Colonic mucosa (tissue), 4 donors: ENCODE measurements at regions of chr1 and their contacts with region 1.

Region 1: GRCh38 chr1:10867138-10867721 is 70.8 kb upstream of the CASZ1 start:
- DNase-seq: peak; percentile 64
- H3K4me3 ChIP-seq: peak overlapping the region; percentile 32
- H3K27ac ChIP-seq: no peak overlapping the region
- H3K4me1 ChIP-seq: no peaks in the 10 kb centered on the region
- H3K27me3 ChIP-seq: peaks cover 6% of the 10 kb centered on the region
- CTCF ChIP-seq: peak; percentile 52

Region 2: GRCh38 chr1:10507111-10507879 is 359.9 kb before region 1 on chr1:
- intact Hi-C with region 1: loop called (anchors 5 kb)
- DNase-seq: peak; percentile 57
- H3K4me3 ChIP-seq: no peak overlapping the region
- H3K27ac ChIP-seq: no peak overlapping the region
- H3K4me1 ChIP-seq: peaks cover 13% of the 10 kb centered on the region
- H3K27me3 ChIP-seq: no peaks in the 10 kb centered on the region
- CTCF ChIP-seq: peak; percentile 88

Region 3: DNA sequence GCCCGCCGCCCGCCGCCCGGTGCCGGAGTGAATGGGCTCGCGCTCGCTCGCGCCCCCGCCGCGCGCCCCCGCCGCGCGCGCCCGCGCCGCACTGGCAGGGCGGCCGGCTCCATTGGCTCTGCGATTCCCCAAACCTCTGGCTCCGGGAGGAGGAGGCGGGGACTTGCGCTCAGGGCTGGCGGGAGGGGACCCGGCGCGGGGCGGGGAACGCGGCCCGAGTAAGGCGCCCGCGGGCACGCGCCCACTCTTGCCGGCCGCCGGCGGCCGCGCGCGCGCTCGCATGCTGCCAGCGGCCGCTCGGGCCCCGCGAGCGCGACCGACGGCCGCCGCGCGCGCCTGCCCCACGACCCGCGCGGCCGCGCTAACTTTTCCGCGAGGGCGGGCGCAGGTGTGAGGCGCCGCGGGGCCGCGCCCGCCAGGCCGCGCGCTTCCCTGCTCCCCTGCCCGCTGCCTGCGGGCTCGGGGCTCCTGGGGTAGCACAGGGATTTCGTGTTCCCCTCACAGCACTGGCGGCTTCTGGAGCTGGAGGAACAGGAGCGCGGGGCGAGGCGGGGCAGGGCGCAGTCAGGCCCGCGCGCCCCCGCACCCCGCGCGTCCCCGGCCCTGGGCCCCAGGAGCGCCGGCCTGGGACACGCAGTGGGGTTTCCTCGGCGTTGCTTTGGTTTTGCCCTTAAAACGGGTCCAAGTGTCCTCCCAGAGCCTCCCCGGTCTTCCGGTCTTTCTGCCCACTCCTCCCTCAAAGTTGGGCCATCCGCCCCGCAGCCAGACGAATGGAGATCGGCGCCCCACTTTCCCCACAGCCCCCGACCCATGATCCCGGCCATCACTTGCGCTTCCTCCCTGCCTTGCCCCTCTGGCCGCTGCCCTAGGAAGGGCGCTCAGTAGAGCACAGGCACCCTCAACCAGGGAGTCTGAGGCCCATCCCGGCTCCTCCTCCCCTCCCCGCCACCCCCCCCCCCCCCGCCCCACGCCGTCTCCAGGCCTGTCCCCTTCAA is 172.3 kb before region 1 on chr1:
- intact Hi-C with region 1: loop called (anchors 5 kb)
- DNase-seq: peak; percentile 87
- H3K4me3 ChIP-seq: peak overlapping the region; percentile 44
- H3K27ac ChIP-seq: peak overlapping the region; percentile 71
- H3K4me1 ChIP-seq: peaks cover 15% of the 10 kb centered on the region
- H3K27me3 ChIP-seq: no peaks in the 10 kb centered on the region
- CTCF ChIP-seq: no peak

Region 4: GRCh38 chr1:10745886-10746455 is 121.3 kb before region 1 on chr1:
- intact Hi-C with region 1: loop called (anchors 10 kb)
- DNase-seq: no peak
- H3K4me3 ChIP-seq: no peak overlapping the region
- H3K27ac ChIP-seq: no peak overlapping the region
- H3K4me1 ChIP-seq: no peaks in the 10 kb centered on the region
- H3K27me3 ChIP-seq: no peaks in the 10 kb centered on the region
- CTCF ChIP-seq: no peak

Region 5: DNA sequence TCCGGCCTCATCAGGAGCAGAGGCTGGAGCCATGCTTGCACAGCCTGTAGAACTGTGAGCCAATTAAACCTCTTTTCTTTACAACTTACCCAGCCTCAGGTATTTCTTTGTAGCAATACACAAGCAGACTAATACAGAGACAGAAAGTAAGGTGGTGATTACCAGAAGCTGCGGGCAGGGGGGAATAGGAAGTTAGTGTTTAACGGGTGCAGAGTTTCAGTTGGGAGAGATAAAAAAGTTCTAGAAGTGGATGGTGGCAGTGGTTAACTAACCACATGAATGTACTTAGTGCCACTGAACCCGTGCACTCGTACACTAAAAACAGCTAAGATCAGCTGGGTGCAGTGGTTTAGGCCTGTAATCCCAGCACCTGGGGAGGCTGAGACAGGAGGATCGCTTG is 64.9 kb after region 1 on chr1:
- intact Hi-C with region 1: no loop called
- DNase-seq: no peak
- H3K4me3 ChIP-seq: no peak overlapping the region
- H3K27ac ChIP-seq: no peak overlapping the region
- H3K4me1 ChIP-seq: no peaks in the 10 kb centered on the region
- H3K27me3 ChIP-seq: no peaks in the 10 kb centered on the region
- CTCF ChIP-seq: no peak